ENCODE measurements at regions of chr3 and their contacts with region 1.

Region 1: DNA sequence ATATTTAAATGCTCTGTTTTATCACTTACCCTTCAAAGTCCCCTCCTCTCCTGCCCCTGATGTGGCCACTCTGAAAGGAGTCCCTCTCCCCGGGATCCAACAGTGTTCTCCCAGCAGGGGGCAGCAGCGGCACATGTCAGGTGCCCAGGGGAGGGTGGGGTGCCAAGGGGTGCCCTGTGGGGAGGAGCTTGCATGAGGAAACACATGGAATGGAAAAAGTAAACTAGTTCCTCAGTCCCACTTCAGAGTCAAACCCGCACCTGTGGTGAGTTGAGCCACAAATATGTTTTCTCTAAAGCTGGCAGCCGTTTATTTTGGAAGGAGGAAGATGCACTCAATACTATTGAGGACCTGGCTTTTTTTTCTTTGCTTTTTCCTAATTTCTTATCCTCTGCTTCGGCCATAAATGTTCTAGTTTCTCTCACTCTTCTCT is 30.1 kb upstream of the NRROS start:
- DNase-seq: peak; percentile 86 to 95 (median 88)
- ATAC-seq: peak; percentile 77 to 95 (median 92)
- H3K4me3 ChIP-seq: peak overlapping the region in 1 of 12 donors; percentile 1
- H3K27ac ChIP-seq: peak overlapping the region in 7 of 12 donors; percentile 2 to 85 (median 44)
- H3K4me1 ChIP-seq: peaks cover 0 to 36% (median 18%) of the 10 kb centered on the region in 12 donors
- H3K27me3 ChIP-seq: peaks cover 0 to 2% (median 0%) of the 10 kb centered on the region in 9 donors
- CTCF ChIP-seq: peak; percentile 72 to 91 (median 82)
- POLR2A ChIP-seq: peak in 1 of 2 donors; percentile 13

Region 2: DNA sequence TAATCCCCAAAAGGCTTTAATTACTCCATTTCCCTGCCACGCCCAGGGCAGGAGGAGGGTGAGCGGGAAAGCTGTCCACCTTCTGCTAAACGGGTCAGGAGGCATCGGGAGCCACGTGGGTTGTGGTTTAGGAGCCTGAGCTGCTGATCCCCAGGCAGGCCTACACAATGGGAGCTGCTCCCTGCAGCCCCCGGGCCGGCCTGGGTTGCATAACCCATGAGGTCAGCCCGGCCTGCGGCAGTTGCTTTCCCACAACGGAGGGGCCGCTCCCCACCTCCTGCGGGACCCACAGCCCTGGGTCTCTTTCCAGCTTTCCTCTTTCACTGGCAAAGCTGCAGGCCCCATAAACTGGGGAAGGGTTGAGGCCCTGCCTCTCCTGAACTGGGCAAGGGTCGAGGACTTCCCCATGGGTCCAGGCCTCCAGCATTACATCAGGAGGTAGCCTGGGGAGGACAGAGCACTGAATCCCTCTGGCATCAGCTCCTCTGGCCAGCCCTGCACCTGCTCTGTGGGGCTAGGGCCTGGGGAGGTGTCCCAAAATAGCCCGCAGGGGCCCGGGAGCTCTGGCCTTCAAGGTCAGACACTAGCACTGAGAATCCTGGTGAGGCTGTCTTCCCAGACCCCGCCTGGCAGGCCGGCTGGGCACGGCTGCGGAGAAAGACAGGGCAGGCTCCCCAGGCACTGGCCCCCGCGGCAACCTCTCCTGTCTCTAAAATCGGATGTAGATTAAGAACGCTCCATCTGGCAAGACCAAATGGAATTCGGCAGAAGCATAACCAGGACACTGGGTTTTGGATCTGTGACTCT is 445.5 kb before region 1 on chr3:
- intact Hi-C with region 1: no loop called
- DNase-seq: peak in 4 of 5 donors; percentile 27 to 69 (median 50)
- ATAC-seq: peak; percentile 60 to 85 (median 84)
- H3K4me3 ChIP-seq: peak overlapping the region in 9 of 12 donors; percentile 2 to 54 (median 39)
- H3K27ac ChIP-seq: peak overlapping the region in 10 of 12 donors; percentile 0 to 81 (median 64)
- H3K4me1 ChIP-seq: peaks cover 0 to 22% (median 6%) of the 10 kb centered on the region in 12 donors
- H3K27me3 ChIP-seq: no peaks in the 10 kb centered on the region
- CTCF ChIP-seq: no peak
- POLR2A ChIP-seq: no peak

Region 3: DNA sequence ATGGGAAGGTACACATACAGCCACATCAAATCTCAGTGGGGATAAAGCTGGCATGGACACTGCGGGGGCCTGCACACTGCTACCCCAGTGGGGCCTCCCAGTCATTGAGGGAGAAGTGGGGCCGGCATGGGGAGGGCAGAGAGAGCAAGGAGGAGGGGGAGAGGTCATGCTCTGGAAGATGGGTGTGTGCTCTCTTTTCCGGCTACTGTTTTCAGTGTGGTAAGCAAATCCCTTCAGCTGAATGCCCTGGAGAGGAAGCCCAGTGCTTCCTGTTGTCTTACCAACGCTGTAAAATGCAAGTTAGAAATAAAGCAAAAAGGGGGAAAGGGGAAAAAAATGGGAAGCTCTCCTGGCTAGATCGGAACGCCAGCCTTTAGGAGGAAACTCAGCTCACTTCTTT is 61.0 kb after region 1 on chr3:
- intact Hi-C with region 1: loop called in 1 of 10 experiments (anchors 5 kb)
- DNase-seq: peak in 1 of 5 donors; percentile 26
- ATAC-seq: peak; percentile 47 to 85 (median 78)
- H3K4me3 ChIP-seq: no peak overlapping the region
- H3K27ac ChIP-seq: peak overlapping the region in 8 of 12 donors; percentile 37 to 76 (median 52)
- H3K4me1 ChIP-seq: peaks cover 0 to 31% (median 1%) of the 10 kb centered on the region in 12 donors
- H3K27me3 ChIP-seq: peaks cover 0 to 3% (median 0%) of the 10 kb centered on the region in 9 donors
- CTCF ChIP-seq: no peak
- POLR2A ChIP-seq: no peak